ENCODE measurements at regions of chr1 and their contacts with region 1.

Region 1: DNA sequence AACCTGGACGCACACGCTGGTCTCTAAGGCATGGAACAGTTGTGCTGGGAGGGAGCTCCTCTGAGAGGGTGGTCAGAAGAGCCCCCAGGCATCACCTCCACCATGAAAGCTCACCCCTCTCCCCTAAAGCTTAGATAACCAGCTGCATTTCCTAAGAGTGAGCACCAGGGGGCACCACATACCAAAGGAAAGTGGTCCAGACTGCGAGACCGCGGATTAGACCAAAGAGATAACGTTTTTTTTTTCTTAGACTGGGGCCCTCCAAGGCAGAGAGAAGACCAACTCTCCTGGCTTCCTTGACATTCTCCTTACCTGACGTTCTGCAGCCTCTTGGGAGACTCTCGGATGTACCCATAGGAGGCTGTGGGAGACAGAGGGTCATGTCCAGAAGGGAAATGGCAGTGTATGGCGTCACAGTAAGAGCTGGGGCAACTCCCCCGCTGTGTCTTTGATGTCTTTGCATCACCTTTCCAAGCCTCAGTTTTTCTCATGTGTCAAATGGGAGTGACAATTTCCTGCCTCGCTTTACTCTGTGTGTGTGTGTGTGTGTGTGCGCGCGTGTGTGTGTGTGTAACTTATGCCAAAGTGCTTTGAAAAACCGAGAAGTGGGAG is 12.3 kb upstream of the IFNLR1 start:
- DNase-seq: peak; percentile 56
- H3K4me3 ChIP-seq: no peak overlapping the region
- CTCF ChIP-seq: peak; percentile 81

Region 2: DNA sequence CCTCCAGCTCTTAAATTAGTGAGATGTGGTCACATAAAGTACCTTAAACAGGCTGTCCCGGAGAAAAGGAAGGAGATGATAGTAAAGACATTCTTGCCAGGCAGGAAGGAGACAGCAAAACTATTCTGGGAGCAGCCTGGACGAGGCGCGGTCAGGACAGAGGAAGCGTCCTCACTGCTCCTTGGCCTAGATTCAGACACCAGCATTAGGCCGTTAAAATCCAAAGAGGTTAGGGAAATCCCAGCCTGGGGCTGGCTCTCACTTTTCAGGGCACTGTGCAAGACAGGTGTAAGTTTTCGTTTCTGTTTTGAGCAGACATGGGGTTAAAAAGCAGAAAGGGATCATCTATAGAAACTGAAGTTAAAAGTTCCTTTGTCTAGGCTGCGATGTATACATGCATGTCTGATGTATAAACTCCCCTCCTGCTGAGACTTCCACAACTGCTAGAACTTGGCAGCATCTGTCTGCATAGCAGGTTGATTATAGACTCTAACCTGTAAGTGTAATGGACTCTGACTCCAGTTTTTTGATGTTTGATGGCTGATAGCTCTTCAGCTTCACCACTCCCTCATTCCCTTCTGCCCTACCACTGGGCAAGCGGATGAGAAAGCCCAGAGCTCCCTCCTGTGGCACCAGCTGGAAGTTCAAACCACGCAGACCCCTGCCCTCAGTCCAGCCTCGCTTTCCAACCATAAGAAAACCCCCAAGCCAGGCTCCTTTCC is 192.6 kb after region 1 on chr1:
- in situ Hi-C with region 1: loop called (anchors 10 kb)
- DNase-seq: peak; percentile 53
- H3K4me3 ChIP-seq: no peak overlapping the region
- CTCF ChIP-seq: peak; percentile 89

Measured in astrocyte of the spinal cord (primary cell).